Gastrocnemius medialis (tissue), 4 donors: ENCODE measurements at regions of chr3 and their contacts with region 1.

Region 1: GRCh38 chr3:58177747-58178527 is 32.8 kb downstream of the DNASE1L3 start:
- DNase-seq: peak; percentile 68 to 73
- ATAC-seq: peak; percentile 88 to 93
- H3K4me3 ChIP-seq: peak overlapping the region; percentile 54 to 62 (median 58)
- H3K27ac ChIP-seq: no peak overlapping the region
- H3K4me1 ChIP-seq: peaks cover 3 to 15% of the 10 kb centered on the region in 2 donors
- H3K27me3 ChIP-seq: no peaks in the 10 kb centered on the region
- CTCF ChIP-seq: peak; percentile 87 to 93 (median 88)
- POLR2A ChIP-seq: no peak

Region 2: DNA sequence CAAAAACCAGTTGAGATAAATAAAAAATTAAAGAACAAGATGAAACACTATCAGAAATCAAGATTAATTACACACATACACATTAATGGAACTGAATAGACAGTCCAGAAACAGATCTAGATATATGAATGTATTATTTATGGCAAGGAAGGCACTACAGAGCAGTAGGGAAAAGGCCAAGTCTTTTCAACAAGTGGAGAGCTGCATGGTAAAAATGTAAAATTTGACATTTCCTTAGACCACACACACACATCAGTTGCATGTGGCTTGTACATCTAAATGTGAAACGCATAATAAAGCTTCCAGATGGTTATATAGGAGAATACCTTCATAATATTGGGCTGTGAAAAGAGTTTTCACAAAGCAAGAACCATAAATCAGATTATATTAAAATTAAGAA is 827.7 kb before region 1 on chr3:
- in situ Hi-C with region 1: no loop called
- intact Hi-C with region 1: no loop called
- DNase-seq: no peak
- ATAC-seq: no peak
- H3K4me3 ChIP-seq: no peak overlapping the region
- H3K27ac ChIP-seq: no peak overlapping the region
- H3K4me1 ChIP-seq: no peaks in the 10 kb centered on the region
- H3K27me3 ChIP-seq: no peaks in the 10 kb centered on the region
- CTCF ChIP-seq: no peak
- POLR2A ChIP-seq: no peak

Region 3: DNA sequence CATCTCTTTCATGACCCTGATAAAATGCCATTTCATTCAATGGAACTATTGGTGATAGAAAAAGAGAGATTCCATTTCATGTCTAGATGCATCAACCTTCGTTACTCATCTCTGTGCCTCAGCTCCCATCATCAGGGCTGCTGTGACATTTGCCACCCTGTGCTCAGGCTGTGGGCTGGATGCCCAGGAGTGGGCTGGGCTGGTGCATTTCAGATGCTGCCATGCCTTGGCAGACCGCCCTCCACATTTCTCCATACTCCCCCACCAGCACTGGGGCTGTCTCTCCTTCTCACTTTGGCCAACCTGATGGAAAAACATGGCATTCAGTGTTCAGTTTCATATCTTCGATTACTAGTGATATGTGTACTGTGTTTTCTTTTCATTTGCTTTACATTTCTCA is 26.3 kb before region 1 on chr3:
- in situ Hi-C with region 1: no loop called
- intact Hi-C with region 1: no loop called
- DNase-seq: no peak
- ATAC-seq: no peak
- H3K4me3 ChIP-seq: no peak overlapping the region
- H3K27ac ChIP-seq: no peak overlapping the region
- H3K4me1 ChIP-seq: no peaks in the 10 kb centered on the region
- H3K27me3 ChIP-seq: no peaks in the 10 kb centered on the region
- CTCF ChIP-seq: no peak
- POLR2A ChIP-seq: no peak

Region 4: DNA sequence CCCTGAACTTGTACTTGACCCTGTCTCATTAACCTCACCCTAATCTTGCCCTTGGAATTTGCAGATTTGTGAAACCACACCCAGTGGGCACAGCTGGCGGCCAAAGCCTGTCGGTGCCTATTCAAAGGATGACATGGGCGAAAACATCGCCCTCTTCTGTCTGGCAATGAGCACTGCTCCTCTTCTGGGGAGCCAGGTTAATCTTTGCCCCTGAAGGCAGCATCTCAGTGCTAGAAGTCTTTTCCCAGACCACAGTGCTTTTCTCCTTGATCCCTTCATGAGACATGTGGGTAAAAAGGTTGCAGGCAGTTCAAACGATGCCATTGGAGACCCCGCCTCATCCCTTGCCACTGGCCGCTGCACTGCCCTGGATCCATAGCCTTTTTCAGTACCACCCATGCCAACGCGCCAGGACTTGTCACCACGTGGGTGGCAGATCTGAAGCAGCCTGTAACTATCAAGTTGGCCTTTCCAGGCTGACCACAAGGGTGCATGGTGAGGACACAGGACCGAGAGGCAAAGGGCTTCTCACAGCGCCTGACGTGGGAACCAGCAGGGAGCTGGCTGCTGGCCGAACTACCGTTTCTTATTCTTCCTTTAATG is 39.4 kb after region 1 on chr3:
- in situ Hi-C with region 1: no loop called
- intact Hi-C with region 1: loop called (anchors 1 kb)
- DNase-seq: peak; percentile 40 to 46
- ATAC-seq: peak; percentile 83 to 84
- H3K4me3 ChIP-seq: no peak overlapping the region
- H3K27ac ChIP-seq: peak overlapping the region in 3 of 4 donors; percentile 14 to 47 (median 30)
- H3K4me1 ChIP-seq: peaks cover 5 to 10% of the 10 kb centered on the region in 2 donors
- H3K27me3 ChIP-seq: no peaks in the 10 kb centered on the region
- CTCF ChIP-seq: peak; percentile 42 to 71 (median 63)
- POLR2A ChIP-seq: no peak